Aorta (tissue), 5 donors: ENCODE measurements at regions of chrX and their contacts with region 1.

Region 1: DNA sequence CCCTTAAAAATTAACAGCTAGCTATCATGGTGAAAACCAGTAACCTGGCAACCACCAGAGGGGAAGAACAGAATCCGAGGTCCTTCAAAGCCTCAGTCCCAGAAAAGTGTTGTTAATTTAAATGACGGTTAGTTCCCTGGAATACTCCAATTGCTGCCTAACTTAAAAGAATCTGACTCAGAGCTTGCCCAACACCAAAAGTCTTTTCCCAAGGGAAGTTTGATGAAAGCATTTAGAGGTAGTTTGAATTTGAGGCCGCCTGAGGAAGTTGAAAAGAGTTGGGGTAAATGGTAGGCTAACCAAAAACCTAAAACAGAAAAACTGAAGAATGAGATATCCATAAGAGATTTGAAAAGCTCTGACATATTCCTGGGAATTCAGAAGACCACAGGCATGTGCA is 46.6 kb downstream of the IL13RA2 start:
- DNase-seq: no peak
- ATAC-seq: no peak
- H3K4me3 ChIP-seq: no peak overlapping the region
- H3K27ac ChIP-seq: peak overlapping the region in 1 of 2 donors; percentile 28
- H3K4me1 ChIP-seq: no peaks in the 10 kb centered on the region
- H3K27me3 ChIP-seq: no peaks in the 10 kb centered on the region

Region 2: DNA sequence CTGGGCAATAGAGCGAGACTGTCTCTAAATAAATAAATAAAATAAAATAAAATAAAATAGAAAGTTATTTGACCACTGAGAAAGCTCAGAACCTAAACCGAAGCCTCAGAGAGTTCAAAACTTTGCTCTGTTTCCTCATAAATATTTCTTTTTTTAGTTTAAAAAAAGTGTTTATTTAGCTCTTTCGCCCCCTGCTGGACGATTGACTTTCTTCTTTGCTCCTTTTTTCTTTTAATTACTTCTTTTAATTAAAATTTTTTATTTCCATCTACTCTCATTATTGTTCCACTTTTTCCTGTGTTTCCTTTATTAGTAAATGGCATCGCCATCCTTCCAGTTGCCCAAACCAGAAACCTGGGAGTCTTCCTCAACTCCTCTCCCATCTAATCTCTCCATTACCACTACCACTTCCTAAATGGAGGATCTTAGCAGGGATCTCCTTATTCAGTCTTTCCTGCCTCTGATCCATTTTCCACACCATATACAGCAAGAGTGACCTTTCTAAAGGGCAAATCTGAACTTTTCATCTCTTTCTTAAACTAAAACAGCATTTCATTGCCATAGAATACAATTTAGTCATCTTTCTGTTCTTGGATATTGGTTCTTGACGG is 47.3 kb after region 1 on chrX:
- intact Hi-C with region 1: loop called (anchors 5 kb)
- DNase-seq: no peak
- ATAC-seq: no peak
- H3K4me3 ChIP-seq: no peak overlapping the region
- H3K27ac ChIP-seq: no peak overlapping the region
- H3K4me1 ChIP-seq: no peaks in the 10 kb centered on the region
- H3K27me3 ChIP-seq: no peaks in the 10 kb centered on the region